Endothelial cell of umbilical vein (primary cell): ENCODE measurements at regions of chr2 and their contacts with region 1.

Region 1: GRCh38 chr2:1591978-1592907 is 152.1 kb downstream of the PXDN start:
- DNase-seq: peak; percentile 79
- H3K4me3 ChIP-seq: no peak overlapping the region
- H3K27ac ChIP-seq: no peak overlapping the region
- H3K4me1 ChIP-seq: peaks cover 12% of the 10 kb centered on the region
- H3K27me3 ChIP-seq: no peaks in the 10 kb centered on the region
- CTCF ChIP-seq: peak; percentile 68 to 83
- POLR2A ChIP-seq: no peak

Region 2: DNA sequence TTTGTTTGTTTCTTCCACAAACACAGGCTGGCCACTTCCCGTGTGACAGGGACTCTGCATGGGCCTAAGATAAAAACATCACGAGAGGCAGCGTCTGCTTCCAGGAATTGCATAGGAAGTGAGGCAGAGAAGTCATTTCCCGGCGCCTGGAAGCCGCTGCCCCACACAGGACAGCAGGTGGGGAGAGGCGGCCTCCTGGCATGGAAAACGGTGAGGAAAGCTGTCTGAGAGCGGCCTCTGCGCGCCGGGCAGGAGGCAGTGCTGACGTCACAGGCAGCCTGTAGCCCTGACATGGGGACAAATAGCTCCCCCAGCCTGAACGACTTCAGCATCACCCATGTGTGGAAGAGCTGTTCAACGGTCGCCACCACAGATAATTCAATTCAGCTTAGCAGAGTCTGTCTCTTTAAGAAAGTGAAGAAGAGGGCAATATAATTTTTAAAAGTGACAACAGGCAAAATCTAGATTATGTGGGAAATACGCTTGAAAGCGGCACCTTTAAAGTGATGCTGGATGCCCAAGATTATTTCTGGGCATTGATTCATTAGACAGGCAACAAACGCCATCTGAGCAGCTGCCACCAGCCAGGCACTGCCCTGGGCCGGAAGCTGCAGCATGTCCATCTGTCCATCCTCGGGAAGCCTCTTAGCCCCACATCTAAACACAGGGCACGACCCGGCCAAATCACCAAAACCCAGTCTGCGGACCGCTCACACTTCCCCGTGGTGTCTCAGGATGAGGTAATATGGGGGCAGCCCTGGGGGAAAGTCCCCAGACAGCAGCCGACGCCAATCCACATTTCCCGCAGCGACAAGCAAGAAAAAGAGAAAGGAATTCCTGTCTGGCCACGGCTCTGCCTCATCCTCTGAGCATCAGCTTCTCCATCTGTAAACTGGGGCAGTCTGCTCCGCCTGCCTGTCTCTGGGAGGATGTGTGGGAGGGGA is 13.1 kb after region 1 on chr2:
- CTCF ChIA-PET with region 1: interaction called, 4 read pairs
- POLR2A ChIA-PET with region 1: no interaction called
- dilution Hi-C with region 1: no loop called
- intact Hi-C with region 1: loop called (anchors 1 kb)
- DNase-seq: peak; percentile 57
- H3K4me3 ChIP-seq: no peak overlapping the region
- H3K27ac ChIP-seq: peak overlapping the region; percentile 80
- H3K4me1 ChIP-seq: peaks cover 29% of the 10 kb centered on the region
- H3K27me3 ChIP-seq: peaks cover 0 to 2% of the 10 kb centered on the region in 2 experiments
- CTCF ChIP-seq: no peak
- POLR2A ChIP-seq: no peak

Region 3: GRCh38 chr2:1625208-1625937 is 33.1 kb after region 1 on chr2:
- CTCF ChIA-PET with region 1: interaction called, 9 read pairs
- POLR2A ChIA-PET with region 1: interaction called, 6 read pairs
- dilution Hi-C with region 1: no loop called
- intact Hi-C with region 1: loop called (anchors 1 kb)
- DNase-seq: peak; percentile 92
- H3K4me3 ChIP-seq: no peak overlapping the region
- H3K27ac ChIP-seq: peak overlapping the region; percentile 79
- H3K4me1 ChIP-seq: peaks cover 23% of the 10 kb centered on the region
- H3K27me3 ChIP-seq: no peaks in the 10 kb centered on the region
- CTCF ChIP-seq: no peak
- POLR2A ChIP-seq: peak; percentile 41

Region 4: GRCh38 chr2:1641523-1641922 is 49.3 kb after region 1 on chr2:
- CTCF ChIA-PET with region 1: interaction called, 4 read pairs
- POLR2A ChIA-PET with region 1: no interaction called
- dilution Hi-C with region 1: no loop called
- intact Hi-C with region 1: loop called (anchors 5 kb)
- DNase-seq: peak; percentile 19
- H3K4me3 ChIP-seq: no peak overlapping the region
- H3K27ac ChIP-seq: no peak overlapping the region
- H3K4me1 ChIP-seq: peaks cover 2% of the 10 kb centered on the region
- H3K27me3 ChIP-seq: no peaks in the 10 kb centered on the region
- CTCF ChIP-seq: no peak
- POLR2A ChIP-seq: no peak

Region 5: DNA sequence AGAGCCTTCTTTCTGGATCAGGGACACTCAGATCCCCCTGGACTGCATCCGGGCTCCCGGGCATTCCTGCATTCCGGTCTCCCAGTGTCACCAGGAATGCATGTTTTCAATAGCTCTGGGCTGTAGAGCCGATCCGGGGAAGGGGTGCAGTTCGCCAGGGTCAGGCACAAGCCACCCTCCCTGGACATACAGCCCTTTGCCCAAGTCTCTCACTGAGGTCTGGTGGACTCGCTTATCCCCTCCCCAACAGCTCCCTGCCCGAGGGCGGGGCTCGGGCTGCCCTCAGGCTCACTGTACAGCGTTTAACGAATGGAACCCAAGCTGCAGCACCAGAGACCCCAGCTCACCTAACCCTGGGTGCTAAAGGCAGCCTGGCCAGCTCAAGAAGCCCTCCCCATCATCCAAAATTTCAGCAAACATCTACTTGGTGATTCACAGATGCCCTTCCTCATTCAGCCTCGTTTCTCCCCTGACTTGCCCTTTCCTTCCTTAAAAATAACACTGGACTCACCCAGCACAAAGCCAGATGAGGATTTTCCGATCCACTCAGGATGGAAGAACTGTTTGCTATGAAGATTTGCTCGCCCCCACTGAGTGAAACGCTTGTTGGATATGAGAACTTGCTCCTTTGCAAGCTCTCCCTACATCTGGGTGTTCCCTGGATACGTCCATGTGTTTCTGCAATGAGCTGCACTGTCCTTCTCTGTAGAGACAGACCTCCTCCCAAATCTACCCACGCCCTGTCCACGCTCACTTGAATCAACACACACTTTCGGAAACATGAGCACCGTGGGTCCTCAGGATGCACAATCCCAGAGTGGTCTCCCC is 93.9 kb after region 1 on chr2:
- CTCF ChIA-PET with region 1: no interaction called
- POLR2A ChIA-PET with region 1: no interaction called
- dilution Hi-C with region 1: no loop called
- intact Hi-C with region 1: loop called (anchors 5 kb)
- DNase-seq: peak; percentile 8
- H3K4me3 ChIP-seq: no peak overlapping the region
- H3K27ac ChIP-seq: peak overlapping the region; percentile 21
- H3K4me1 ChIP-seq: peaks cover 9% of the 10 kb centered on the region
- H3K27me3 ChIP-seq: no peaks in the 10 kb centered on the region
- CTCF ChIP-seq: no peak
- POLR2A ChIP-seq: no peak

Region 6: DNA sequence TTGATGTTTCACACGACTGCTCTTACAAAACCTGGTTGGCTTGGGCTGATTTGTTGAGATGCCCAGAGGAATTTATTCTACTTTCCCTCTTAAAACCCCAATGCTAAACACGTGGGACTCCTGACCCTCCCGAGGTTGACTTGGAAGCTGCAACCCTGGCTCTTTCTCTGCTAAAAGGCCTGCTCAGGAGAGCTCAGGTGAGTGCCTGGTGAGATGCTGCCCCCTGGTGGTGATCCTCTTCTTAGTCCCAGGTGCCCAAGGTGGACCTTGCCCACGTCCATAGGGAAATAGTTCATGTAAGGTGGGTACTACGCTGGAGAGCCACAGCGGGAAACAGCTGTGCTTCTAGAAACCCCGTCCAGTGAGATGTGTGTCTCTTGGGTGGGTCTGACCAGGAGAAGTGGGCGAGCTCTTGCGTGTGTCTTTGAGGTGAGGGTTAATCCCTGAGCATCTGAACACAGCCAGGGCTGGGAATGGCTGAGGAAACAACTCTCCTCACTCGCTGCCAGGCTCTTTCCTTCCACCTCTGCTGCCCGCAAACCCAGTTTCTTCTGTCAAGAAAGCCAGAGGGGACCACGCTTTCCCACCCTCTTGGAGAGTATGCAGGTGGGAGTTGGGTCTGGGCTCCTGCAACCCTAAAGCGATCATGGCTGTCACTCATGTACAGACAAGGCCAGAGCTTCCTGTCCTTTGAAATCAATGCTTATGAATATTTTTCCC is 177.6 kb after region 1 on chr2:
- CTCF ChIA-PET with region 1: interaction called, 61 read pairs
- POLR2A ChIA-PET with region 1: no interaction called
- dilution Hi-C with region 1: no loop called
- intact Hi-C with region 1: loop called (anchors 1 kb)
- DNase-seq: peak; percentile 51
- H3K4me3 ChIP-seq: no peak overlapping the region
- H3K27ac ChIP-seq: no peak overlapping the region
- H3K4me1 ChIP-seq: no peaks in the 10 kb centered on the region
- H3K27me3 ChIP-seq: no peaks in the 10 kb centered on the region
- CTCF ChIP-seq: peak; percentile 80
- POLR2A ChIP-seq: no peak

Region 7: DNA sequence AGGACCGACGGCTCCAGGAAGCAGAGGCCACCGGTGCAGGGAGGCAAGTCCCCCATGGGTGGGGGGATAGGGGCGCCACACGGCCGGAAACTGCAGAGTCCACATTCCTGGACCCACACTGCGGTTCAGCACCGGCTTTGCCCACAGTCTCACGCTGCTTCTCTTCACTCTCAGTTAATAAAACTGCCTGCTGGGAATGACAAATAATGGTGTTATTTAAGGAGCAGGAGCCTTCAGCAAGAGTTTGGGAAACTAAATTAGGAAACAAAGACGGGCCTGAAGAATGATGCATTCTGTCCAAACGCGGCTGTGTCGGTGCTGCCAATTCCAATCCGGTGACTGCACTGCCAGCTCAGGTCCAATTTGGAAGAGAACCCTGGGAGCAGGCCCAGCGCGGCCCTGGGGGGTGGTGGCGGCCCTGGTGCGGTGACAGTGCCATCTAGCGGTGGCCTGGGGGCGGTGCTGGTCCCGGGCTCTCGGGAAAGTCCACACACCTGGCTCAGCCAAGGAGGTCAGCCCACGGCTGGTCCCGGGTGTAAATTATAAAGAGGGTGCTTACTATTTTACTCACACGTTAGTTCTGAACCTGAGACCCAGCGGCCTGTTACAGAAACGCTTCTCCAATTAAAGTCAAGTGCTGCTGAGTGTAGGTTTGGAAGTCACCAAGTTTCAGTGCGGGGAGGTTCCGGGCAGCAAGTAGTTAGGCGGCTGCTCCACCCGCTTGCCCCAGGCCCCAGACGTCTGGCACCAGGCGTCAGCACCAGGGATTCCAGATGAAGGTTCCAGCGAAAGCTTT is 225.2 kb after region 1 on chr2:
- CTCF ChIA-PET with region 1: interaction called, 17 read pairs
- POLR2A ChIA-PET with region 1: no interaction called
- dilution Hi-C with region 1: no loop called
- intact Hi-C with region 1: loop called (anchors 2 kb)
- DNase-seq: peak; percentile 32
- H3K4me3 ChIP-seq: no peak overlapping the region
- H3K27ac ChIP-seq: no peak overlapping the region
- H3K4me1 ChIP-seq: no peaks in the 10 kb centered on the region
- H3K27me3 ChIP-seq: peaks cover 0 to 2% of the 10 kb centered on the region in 2 experiments
- CTCF ChIP-seq: peak; percentile 89 to 97
- POLR2A ChIP-seq: no peak

Region 8: GRCh38 chr2:1954061-1954460 is 361.8 kb after region 1 on chr2:
- CTCF ChIA-PET with region 1: no interaction called
- POLR2A ChIA-PET with region 1: no interaction called
- dilution Hi-C with region 1: no loop called
- intact Hi-C with region 1: no loop called
- DNase-seq: no peak
- H3K4me3 ChIP-seq: no peak overlapping the region
- H3K27ac ChIP-seq: no peak overlapping the region
- H3K4me1 ChIP-seq: no peaks in the 10 kb centered on the region
- H3K27me3 ChIP-seq: no peaks in the 10 kb centered on the region
- CTCF ChIP-seq: no peak
- POLR2A ChIP-seq: no peak